ENCODE measurements at regions of chr6 and their contacts with region 1.

Region 1: GRCh38 chr6:91198588-91199255 is 611.9 kb upstream of the MAP3K7 start:
- DNase-seq: no peak
- ATAC-seq: no peak
- H3K4me3 ChIP-seq: no peak overlapping the region
- H3K27ac ChIP-seq: no peak overlapping the region
- H3K4me1 ChIP-seq: no peaks in the 10 kb centered on the region
- H3K27me3 ChIP-seq: no peaks in the 10 kb centered on the region
- CTCF ChIP-seq: no peak
- EP300 ChIP-seq: no peak
- POLR2A ChIP-seq: no peak
- RAD21 ChIP-seq: no peak

Region 2: DNA sequence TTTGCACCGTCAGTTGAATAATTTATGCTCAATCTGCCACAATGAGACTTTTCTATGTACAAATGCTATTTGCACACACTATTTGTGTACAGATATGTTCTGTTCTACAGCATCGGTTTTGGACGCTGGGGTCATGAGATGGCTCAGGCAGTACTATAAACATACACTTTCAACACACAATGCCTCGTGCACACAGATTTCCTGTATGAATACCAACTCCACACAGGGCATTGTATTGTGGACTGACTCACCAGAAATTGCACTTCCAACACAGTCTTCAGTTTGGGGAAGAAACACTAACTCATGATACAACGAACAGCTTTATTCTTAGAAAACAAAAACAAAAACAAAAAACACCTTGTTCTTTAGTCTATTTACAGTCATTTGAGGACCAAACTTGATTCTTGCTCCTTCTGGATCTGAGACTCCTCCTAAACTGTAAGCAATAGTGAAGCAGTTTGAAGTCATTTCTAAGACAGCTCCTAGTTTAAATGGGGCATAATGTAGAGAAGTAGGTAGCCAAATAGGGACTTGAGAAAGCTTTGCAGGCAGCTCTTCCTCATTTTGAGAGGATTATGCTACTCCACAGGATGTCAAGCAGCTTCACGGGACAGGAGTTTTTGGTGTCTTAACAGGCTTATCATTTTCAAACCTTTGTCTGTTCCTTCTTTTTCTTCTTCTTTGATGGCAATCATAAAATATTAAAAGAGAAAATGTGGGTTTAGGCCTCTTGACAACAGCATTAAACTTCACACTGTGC is 1270.8 kb before region 1 on chr6:
- CTCF ChIA-PET with region 1: no interaction called
- POLR2A ChIA-PET with region 1: no interaction called
- in situ Hi-C with region 1: no loop called
- intact Hi-C with region 1: loop called (anchors 10 kb)
- DNase-seq: no peak
- ATAC-seq: no peak
- H3K4me3 ChIP-seq: no peak overlapping the region
- H3K27ac ChIP-seq: no peak overlapping the region
- H3K4me1 ChIP-seq: no peaks in the 10 kb centered on the region
- H3K27me3 ChIP-seq: peaks cover 4 to 50% of the 10 kb centered on the region in 2 experiments; a peak in 3 of 5 replicates
- CTCF ChIP-seq: no peak
- EP300 ChIP-seq: no peak
- POLR2A ChIP-seq: no peak
- RAD21 ChIP-seq: no peak

Region 3: GRCh38 chr6:91045161-91045560 is 153.6 kb before region 1 on chr6:
- CTCF ChIA-PET with region 1: no interaction called
- POLR2A ChIA-PET with region 1: no interaction called
- in situ Hi-C with region 1: no loop called
- intact Hi-C with region 1: no loop called
- DNase-seq: no peak
- ATAC-seq: no peak
- H3K4me3 ChIP-seq: no peak overlapping the region
- H3K27ac ChIP-seq: no peak overlapping the region
- H3K4me1 ChIP-seq: no peaks in the 10 kb centered on the region
- H3K27me3 ChIP-seq: no peaks in the 10 kb centered on the region
- CTCF ChIP-seq: no peak
- EP300 ChIP-seq: no peak
- POLR2A ChIP-seq: no peak
- RAD21 ChIP-seq: no peak